Esophagus muscularis mucosa (tissue), 4 donors: ENCODE measurements at regions of chr2 and their contacts with region 1.

Region 1: DNA sequence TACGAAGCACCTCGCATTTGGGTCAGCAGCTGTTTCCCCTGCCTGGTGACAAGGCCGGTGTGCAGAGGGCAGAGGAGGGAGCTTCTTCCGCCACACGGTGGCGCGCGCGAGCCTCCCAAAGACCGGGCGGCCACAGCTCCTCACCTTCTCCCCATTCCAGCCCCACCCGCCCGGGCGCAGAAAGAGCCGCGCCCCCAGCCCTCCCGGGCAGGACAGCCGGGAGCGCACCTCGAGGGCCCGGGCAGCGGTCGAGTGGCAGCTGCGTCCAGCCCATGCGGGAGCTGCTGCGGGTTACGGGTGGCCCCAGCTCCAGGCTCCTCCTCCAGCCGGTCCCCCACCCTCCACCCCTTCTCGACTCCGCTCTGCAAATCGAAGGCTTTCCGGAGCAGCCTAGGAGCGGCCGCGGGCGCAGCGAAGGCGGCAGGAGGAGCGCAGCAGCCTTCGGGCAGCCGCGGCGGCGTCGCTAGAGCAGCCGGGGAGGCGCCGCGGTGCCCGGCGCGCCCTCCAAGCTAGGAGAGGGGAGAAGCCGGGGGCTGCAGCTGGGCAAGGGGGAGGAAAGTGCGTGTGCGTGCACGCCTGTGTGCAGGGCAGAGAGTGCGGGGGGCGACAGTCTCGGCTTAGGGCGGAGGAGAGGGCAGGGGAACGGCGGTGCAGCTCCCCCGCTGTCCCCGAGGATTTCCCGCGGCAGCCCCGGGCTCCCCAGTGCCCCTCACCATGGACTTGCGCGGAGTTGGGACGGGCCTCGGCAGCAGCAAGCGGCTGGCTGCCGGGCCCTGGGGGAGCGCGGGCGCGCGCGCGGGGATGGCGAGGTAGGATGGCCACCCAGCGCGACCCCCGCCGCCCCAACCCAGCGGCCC is at the start of gene CCDC85A:
- DNase-seq: peak; percentile 95
- H3K4me3 ChIP-seq: peak within 1 kb of the TSS; percentile 61 to 65 (median 62)
- H3K27ac ChIP-seq: peak within 1 kb of the TSS in 3 of 4 donors; percentile 51 to 57 (median 54)
- H3K4me1 ChIP-seq: peaks cover 6 to 28% (median 27%) of the 10 kb centered on the region in 4 donors
- H3K27me3 ChIP-seq: peaks cover 6 to 88% (median 18%) of the 10 kb centered on the region in 4 donors
- CTCF ChIP-seq: peak; percentile 72 to 95 (median 84)
- EP300 ChIP-seq: no peak
- POLR2A ChIP-seq: no peak
- total RNA-seq, gene CCDC85A: 4.0 to 6.7 (median 5.8) TPM

Region 2: DNA sequence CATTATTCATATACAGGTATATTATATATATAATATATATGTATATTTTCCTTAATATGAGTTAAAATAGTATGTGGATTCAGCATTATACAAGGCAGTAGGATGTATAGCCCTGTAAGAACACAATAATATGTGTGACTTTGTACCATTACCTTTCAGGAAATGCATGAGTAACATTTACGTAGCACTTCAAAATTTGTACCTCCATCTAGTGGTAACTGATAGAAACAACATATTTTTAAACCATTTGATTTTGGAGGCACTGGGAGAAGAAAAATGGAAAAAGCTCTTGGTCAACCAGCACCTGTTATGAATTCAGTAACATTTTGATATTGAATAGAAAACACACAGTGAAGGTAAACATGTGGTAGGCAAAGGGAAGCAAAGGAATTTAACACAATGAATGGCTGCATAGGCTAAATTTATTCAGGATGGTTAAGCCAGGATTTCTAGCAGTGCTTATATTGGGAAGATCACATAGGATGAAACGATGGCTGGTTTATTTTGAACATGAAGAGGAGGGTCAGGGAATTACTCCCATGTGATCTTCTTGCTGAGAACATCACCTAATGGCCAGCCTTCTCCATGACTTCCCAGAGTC is 565.4 kb after region 1 on chr2:
- intact Hi-C with region 1: loop called (anchors 10 kb)
- DNase-seq: no peak
- H3K4me3 ChIP-seq: no peak overlapping the region
- H3K27ac ChIP-seq: no peak overlapping the region
- H3K4me1 ChIP-seq: no peaks in the 10 kb centered on the region
- H3K27me3 ChIP-seq: no peaks in the 10 kb centered on the region
- CTCF ChIP-seq: peak in 2 of 3 experiments; percentile 24 to 40
- EP300 ChIP-seq: no peak
- POLR2A ChIP-seq: no peak

Region 3: GRCh38 chr2:57516698-57517340 is 1332.9 kb after region 1 on chr2:
- intact Hi-C with region 1: loop called (anchors 5 kb)
- DNase-seq: no peak
- H3K4me3 ChIP-seq: no peak overlapping the region
- H3K27ac ChIP-seq: no peak overlapping the region
- H3K4me1 ChIP-seq: no peaks in the 10 kb centered on the region
- H3K27me3 ChIP-seq: peaks cover 0 to 8% (median 0%) of the 10 kb centered on the region in 4 donors
- CTCF ChIP-seq: peak; percentile 45 to 61 (median 52)
- EP300 ChIP-seq: no peak
- POLR2A ChIP-seq: no peak